ENCODE measurements at regions of chr2 and their contacts with region 1.

Region 1: GRCh38 chr2:99489761-99490622 is at the start of gene REV1:
- DNase-seq: peak; percentile 72
- ATAC-seq: peak; percentile 89
- H3K4me3 ChIP-seq: peak within 1 kb of the TSS; percentile 79
- H3K27ac ChIP-seq: peak within 1 kb of the TSS; percentile 63
- H3K4me1 ChIP-seq: peaks cover 10% of the 10 kb centered on the region
- H3K27me3 ChIP-seq: no peaks in the 10 kb centered on the region
- CTCF ChIP-seq: peak; percentile 54 to 85 (median 65); a peak in 5 of 6 replicates
- EP300 ChIP-seq: no peak; a peak in 1 of 4 replicates
- POLR2A ChIP-seq: peak; percentile 86
- RAD21 ChIP-seq: peak; percentile 83
- polyA plus RNA-seq, gene REV1: 11.3 to 12.9 TPM

Region 2: GRCh38 chr2:99032786-99033185 is 457.2 kb before region 1 on chr2:
- CTCF ChIA-PET with region 1: no interaction called
- POLR2A ChIA-PET with region 1: no interaction called
- RAD21 ChIA-PET with region 1: no interaction called
- SMC1A ChIA-PET with region 1: no interaction called
- in situ Hi-C with region 1: no loop called
- intact Hi-C with region 1: no loop called
- DNase-seq: no peak
- ATAC-seq: peak; percentile 56
- H3K4me3 ChIP-seq: no peak overlapping the region
- H3K27ac ChIP-seq: no peak overlapping the region
- H3K4me1 ChIP-seq: no peaks in the 10 kb centered on the region
- H3K27me3 ChIP-seq: no peaks in the 10 kb centered on the region
- CTCF ChIP-seq: no peak
- EP300 ChIP-seq: no peak
- POLR2A ChIP-seq: no peak
- RAD21 ChIP-seq: no peak

Region 3: DNA sequence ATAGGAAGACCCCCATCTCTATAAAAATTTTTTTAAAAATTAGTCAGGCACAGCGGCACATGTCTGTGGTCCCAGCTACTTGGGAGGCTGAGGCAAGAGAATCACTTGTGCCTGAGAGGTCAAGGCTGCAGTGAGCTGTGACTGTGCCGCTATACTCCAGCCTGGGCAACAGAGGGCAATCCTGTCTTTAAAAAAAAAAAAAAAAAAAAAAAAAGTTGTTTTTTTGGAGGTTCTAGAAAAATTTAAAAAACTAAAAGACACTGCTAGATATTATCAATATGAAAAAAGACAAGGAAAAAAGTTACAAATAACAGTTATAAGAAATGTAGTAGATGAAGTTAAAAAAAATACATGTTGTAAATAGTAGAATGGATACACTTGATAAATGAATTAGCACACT is 404.6 kb before region 1 on chr2:
- CTCF ChIA-PET with region 1: no interaction called
- POLR2A ChIA-PET with region 1: no interaction called
- RAD21 ChIA-PET with region 1: no interaction called
- SMC1A ChIA-PET with region 1: no interaction called
- in situ Hi-C with region 1: no loop called
- intact Hi-C with region 1: loop called (anchors 5 kb)
- DNase-seq: no peak
- ATAC-seq: peak; percentile 60
- H3K4me3 ChIP-seq: no peak overlapping the region
- H3K27ac ChIP-seq: no peak overlapping the region
- H3K4me1 ChIP-seq: peaks cover 4% of the 10 kb centered on the region; the same call in 1 of the 2 replicates
- H3K27me3 ChIP-seq: no peaks in the 10 kb centered on the region
- CTCF ChIP-seq: peak; percentile 23 to 38 (median 27); a peak in 3 of 6 replicates
- EP300 ChIP-seq: no peak
- POLR2A ChIP-seq: no peak
- RAD21 ChIP-seq: peak; percentile 47

Region 4: GRCh38 chr2:99442837-99443236 is 47.2 kb before region 1 on chr2:
- CTCF ChIA-PET with region 1: interaction called, 18 read pairs
- POLR2A ChIA-PET with region 1: no interaction called
- RAD21 ChIA-PET with region 1: no interaction called
- SMC1A ChIA-PET with region 1: interaction called, 5 read pairs
- in situ Hi-C with region 1: loop called (anchors 5 kb)
- intact Hi-C with region 1: loop called (anchors 2 kb)
- DNase-seq: no peak
- ATAC-seq: peak; percentile 86
- H3K4me3 ChIP-seq: no peak overlapping the region
- H3K27ac ChIP-seq: no peak overlapping the region
- H3K4me1 ChIP-seq: peaks cover 3% of the 10 kb centered on the region; the same call in 1 of the 2 replicates
- H3K27me3 ChIP-seq: no peaks in the 10 kb centered on the region
- CTCF ChIP-seq: peak in 2 of 3 experiments; percentile 18 to 40; a peak in 2 of 6 replicates
- EP300 ChIP-seq: no peak
- POLR2A ChIP-seq: no peak
- RAD21 ChIP-seq: no peak

Region 5: DNA sequence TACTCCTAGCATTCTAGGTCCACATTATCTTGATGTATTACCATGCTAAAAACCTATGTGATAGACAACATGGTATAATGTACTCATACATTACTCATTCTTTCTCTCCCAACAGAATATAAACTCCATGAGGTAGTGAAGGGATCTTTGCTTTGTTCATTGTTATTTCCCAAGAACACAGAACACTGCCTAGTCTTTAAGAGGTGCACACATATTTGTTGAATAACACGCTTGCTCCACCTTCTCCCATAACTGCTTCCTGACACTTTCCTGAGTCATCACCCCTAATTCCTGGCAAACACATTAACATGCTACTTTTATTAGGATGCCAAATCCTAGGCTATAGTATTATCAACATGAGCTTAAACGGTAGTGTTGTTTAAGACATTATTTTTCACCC is 41.4 kb before region 1 on chr2:
- CTCF ChIA-PET with region 1: interaction called, 18 read pairs
- POLR2A ChIA-PET with region 1: no interaction called
- RAD21 ChIA-PET with region 1: interaction called, 3 read pairs
- SMC1A ChIA-PET with region 1: interaction called, 3 read pairs
- in situ Hi-C with region 1: loop called (anchors 5 kb)
- intact Hi-C with region 1: loop called (anchors 2 kb)
- DNase-seq: no peak
- ATAC-seq: no peak
- H3K4me3 ChIP-seq: no peak overlapping the region
- H3K27ac ChIP-seq: no peak overlapping the region
- H3K4me1 ChIP-seq: peaks cover 3% of the 10 kb centered on the region; the same call in 1 of the 2 replicates
- H3K27me3 ChIP-seq: no peaks in the 10 kb centered on the region
- CTCF ChIP-seq: no peak
- EP300 ChIP-seq: no peak
- POLR2A ChIP-seq: no peak
- RAD21 ChIP-seq: no peak

Region 6: GRCh38 chr2:99512181-99512591 is 22.2 kb after region 1 on chr2:
- CTCF ChIA-PET with region 1: no interaction called
- POLR2A ChIA-PET with region 1: no interaction called
- RAD21 ChIA-PET with region 1: no interaction called
- SMC1A ChIA-PET with region 1: no interaction called
- in situ Hi-C with region 1: no loop called
- intact Hi-C with region 1: no loop called
- DNase-seq: no peak
- ATAC-seq: no peak
- H3K4me3 ChIP-seq: no peak overlapping the region
- H3K27ac ChIP-seq: no peak overlapping the region
- H3K4me1 ChIP-seq: no peaks in the 10 kb centered on the region
- H3K27me3 ChIP-seq: no peaks in the 10 kb centered on the region
- CTCF ChIP-seq: no peak
- EP300 ChIP-seq: no peak
- POLR2A ChIP-seq: no peak
- RAD21 ChIP-seq: no peak

Region 7: GRCh38 chr2:99597616-99598015 is 107.6 kb after region 1 on chr2:
- CTCF ChIA-PET with region 1: no interaction called
- POLR2A ChIA-PET with region 1: no interaction called
- RAD21 ChIA-PET with region 1: no interaction called
- SMC1A ChIA-PET with region 1: no interaction called
- in situ Hi-C with region 1: no loop called
- intact Hi-C with region 1: no loop called
- DNase-seq: no peak
- ATAC-seq: no peak
- H3K4me3 ChIP-seq: no peak overlapping the region
- H3K27ac ChIP-seq: no peak overlapping the region
- H3K4me1 ChIP-seq: no peaks in the 10 kb centered on the region
- H3K27me3 ChIP-seq: no peaks in the 10 kb centered on the region; a peak in 2 of 4 replicates
- CTCF ChIP-seq: no peak
- EP300 ChIP-seq: no peak
- POLR2A ChIP-seq: no peak
- RAD21 ChIP-seq: no peak